ENCODE measurements at regions of chr5 and their contacts with region 1.

Region 1: DNA sequence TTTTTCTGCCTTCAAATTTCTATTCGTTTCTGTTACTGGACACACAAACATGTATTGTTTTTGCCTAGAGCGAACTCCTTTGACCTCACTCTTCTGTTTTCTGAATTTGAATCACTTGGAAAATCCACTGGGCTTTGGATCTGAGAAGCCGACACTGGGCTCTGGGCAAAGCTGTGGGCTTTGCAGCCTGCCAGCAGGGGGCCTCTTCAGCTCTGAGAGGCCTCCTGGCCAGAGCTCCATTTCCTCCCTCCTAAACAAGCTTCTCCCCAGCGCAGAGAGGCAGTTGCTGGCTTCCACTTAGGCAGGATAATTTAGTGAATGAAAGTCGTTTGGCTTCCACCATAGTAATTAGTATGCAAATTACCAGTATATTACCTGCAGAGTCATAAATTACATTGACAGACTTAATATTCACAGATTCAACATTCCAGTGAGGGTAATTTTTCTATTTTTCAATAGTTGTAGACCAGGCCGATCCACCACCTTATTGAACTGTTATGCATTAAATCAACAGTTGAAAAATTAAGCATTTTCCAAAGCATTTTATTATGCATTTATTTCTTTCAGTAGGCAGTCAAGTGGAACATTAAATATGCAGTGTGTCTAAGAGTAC is 104.0 kb upstream of the ZNF366 start:
- DNase-seq: peak; percentile 66
- H3K4me3 ChIP-seq: peak overlapping the region in 1 of 2 experiments; percentile 16; a peak in 1 of 4 replicates
- H3K27ac ChIP-seq: peak overlapping the region in 1 of 2 experiments; percentile 66; a peak in 2 of 4 replicates
- H3K4me1 ChIP-seq: peaks cover 0 to 26% of the 10 kb centered on the region in 2 experiments; a peak in 2 of 4 replicates
- H3K27me3 ChIP-seq: no peaks in the 10 kb centered on the region
- CTCF ChIP-seq: peak; percentile 96
- EP300 ChIP-seq: no peak
- RAD21 ChIP-seq: peak; percentile 86

Region 2: GRCh38 chr5:72630081-72630480 is 18.9 kb after region 1 on chr5:
- CTCF ChIA-PET with region 1: interaction called, 12 read pairs
- POLR2A ChIA-PET with region 1: no interaction called
- DNase-seq: no peak
- H3K4me3 ChIP-seq: no peak overlapping the region
- H3K27ac ChIP-seq: no peak overlapping the region
- H3K4me1 ChIP-seq: peaks cover 11 to 13% of the 10 kb centered on the region in 2 experiments
- H3K27me3 ChIP-seq: no peaks in the 10 kb centered on the region
- CTCF ChIP-seq: no peak
- EP300 ChIP-seq: no peak
- RAD21 ChIP-seq: no peak

Region 3: GRCh38 chr5:72692231-72692637 is 81.0 kb after region 1 on chr5:
- CTCF ChIA-PET with region 1: interaction called, 46 read pairs
- POLR2A ChIA-PET with region 1: interaction called, 18 read pairs
- DNase-seq: no peak
- H3K4me3 ChIP-seq: no peak overlapping the region
- H3K27ac ChIP-seq: peak overlapping the region in 1 of 2 experiments; percentile 99; a peak in 2 of 4 replicates
- H3K4me1 ChIP-seq: peaks cover 0 to 56% of the 10 kb centered on the region in 2 experiments; a peak in 2 of 4 replicates
- H3K27me3 ChIP-seq: no peaks in the 10 kb centered on the region; the same call in 1 of the 2 replicates
- CTCF ChIP-seq: no peak
- EP300 ChIP-seq: no peak
- RAD21 ChIP-seq: no peak

Region 4: DNA sequence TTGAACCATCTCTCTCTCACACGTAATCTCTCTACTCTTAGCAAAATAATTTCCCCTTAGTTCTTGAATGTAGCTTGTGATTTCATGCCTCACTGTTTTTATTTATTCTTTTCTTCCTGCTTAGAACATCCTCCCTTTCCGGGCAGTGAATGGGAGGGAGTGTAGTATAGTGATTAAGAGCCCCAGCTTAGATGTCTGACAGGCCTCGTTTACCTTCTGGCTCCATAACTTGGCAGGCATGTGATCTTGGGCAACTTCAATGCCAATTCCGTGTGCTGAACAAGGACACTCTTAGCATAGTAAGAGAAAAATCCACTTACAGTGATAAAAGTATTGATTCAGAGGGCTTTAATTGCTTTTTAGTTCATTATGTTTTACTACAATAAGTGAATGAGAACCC is 109.0 kb after region 1 on chr5:
- CTCF ChIA-PET with region 1: interaction called, 10 read pairs
- POLR2A ChIA-PET with region 1: no interaction called
- DNase-seq: no peak
- H3K4me3 ChIP-seq: no peak overlapping the region
- H3K27ac ChIP-seq: no peak overlapping the region
- H3K4me1 ChIP-seq: peaks cover 0 to 20% of the 10 kb centered on the region in 2 experiments; a peak in 1 of 4 replicates
- H3K27me3 ChIP-seq: no peaks in the 10 kb centered on the region
- CTCF ChIP-seq: no peak
- EP300 ChIP-seq: no peak
- RAD21 ChIP-seq: no peak

Measured in SK-N-SH (cell line).